Posterior vena cava (tissue), 2 donors: ENCODE measurements at regions of chr10 and their contacts with region 1.

Region 1: GRCh38 chr10:132452631-132453469 is 55.9 kb downstream of the PWWP2B start:
- DNase-seq: peak; percentile 95

Region 2: GRCh38 chr10:132223156-132223590 is 229.7 kb before region 1 on chr10:
- intact Hi-C with region 1: loop called (anchors 5 kb)
- DNase-seq: peak; percentile 94

Region 3: GRCh38 chr10:132229834-132230556 is 222.9 kb before region 1 on chr10:
- intact Hi-C with region 1: loop called in 1 of 2 experiments (anchors 5 kb)
- DNase-seq: no peak

Region 4: DNA sequence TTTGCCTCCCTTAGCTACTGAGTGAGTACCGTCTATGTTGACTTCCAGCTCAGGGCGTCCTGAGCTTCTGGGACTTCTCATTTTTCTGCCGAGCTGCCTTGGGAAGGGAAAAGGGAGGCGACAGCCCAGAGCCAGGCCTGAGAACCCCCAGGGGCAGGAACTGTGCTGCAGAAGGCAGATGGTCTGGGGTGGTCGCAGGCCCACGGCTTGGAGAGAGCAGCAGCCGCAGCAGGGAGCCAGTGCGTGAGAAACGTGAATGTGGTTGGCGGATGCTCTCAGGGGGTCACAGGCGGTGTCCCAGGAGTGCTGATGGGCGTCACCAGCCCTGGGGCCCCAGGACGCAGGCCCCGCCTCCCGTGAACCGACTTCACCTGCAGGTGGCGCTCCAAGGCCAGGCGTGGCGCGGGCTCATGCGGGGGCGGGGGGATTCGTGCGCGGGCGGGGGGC is 65.1 kb before region 1 on chr10:
- intact Hi-C with region 1: loop called (anchors 2 to 5 kb)
- DNase-seq: peak; percentile 94

Region 5: DNA sequence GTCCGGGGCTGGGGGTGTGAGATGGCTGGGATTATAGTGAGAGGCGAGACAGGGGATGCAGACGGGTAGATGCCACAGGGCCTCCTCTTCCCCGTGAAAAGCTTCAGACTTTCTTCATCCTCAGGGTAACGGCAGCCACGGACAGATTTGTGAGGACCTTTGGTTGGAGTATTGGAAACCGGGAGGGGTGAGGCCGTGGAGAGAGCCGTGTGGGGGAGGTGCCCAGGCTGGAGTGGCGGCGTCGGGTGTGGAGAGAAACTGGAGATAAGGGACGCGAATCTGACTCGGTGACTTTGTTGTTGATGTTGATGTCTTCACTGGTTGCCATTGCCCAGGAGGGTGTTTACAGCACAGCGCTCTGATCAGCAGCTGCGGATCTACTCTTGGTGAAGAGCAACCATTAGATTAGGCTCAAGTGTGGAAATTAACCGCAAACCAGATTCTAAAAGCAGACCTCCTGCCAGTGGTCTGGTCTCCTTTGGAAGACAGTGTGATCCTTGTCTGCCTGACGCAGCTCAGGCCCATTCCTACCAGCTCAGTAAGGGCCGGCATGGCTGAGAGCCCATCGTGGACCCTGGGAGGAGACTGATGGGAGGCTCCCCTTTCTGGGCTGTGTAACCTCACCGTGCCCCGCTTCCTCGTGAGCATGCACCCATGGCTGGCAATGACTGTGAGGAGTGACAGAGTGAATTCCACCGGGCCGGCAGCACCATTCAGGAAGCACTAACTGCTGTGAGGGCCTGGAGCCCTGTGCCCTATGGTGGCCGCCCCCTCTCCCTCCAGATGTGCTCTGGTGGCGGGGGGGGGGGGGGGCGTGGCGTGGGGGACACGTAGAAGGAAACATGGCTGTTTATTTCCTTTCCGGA is 175.0 kb after region 1 on chr10:
- intact Hi-C with region 1: no loop called
- DNase-seq: peak; percentile 83